ENCODE measurements at regions of chr3 and their contacts with region 1.

Region 1: GRCh38 chr3:146313411-146314111 is 62.7 kb upstream of the PLSCR4 start:
- DNase-seq: peak; percentile 90
- ATAC-seq: peak; percentile 92
- H3K4me3 ChIP-seq: no peak overlapping the region
- H3K27ac ChIP-seq: no peak overlapping the region
- H3K4me1 ChIP-seq: peaks cover 4% of the 10 kb centered on the region; the same call in 1 of the 2 replicates
- H3K27me3 ChIP-seq: no peaks in the 10 kb centered on the region
- CTCF ChIP-seq: no peak
- POLR2A ChIP-seq: no peak
- RAD21 ChIP-seq: no peak

Region 2: DNA sequence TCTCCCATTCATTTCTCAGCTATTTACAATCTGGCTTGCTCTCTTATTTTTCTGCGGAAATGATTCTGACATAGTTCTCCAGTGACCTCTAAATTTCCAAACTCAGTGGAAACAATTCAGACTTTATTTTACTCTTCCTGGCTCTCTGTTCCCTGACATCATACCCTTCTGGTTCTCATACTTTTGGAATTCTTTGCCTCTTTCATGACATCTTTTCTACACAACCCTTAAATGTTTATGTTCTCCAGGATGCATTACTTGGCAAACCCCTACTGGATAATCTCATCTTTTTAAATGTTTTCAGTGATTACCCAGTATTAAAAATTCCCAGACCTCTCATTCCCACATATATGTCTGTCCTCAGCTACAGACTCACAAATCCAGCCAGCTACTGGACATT is 38.7 kb before region 1 on chr3:
- CTCF ChIA-PET with region 1: no interaction called
- POLR2A ChIA-PET with region 1: no interaction called
- dilution Hi-C with region 1: no loop called
- in situ Hi-C with region 1: no loop called
- intact Hi-C with region 1: loop called (anchors 2 kb)
- DNase-seq: peak; percentile 98
- ATAC-seq: peak; percentile 88
- H3K4me3 ChIP-seq: no peak overlapping the region
- H3K27ac ChIP-seq: no peak overlapping the region
- H3K4me1 ChIP-seq: peaks cover 4% of the 10 kb centered on the region
- H3K27me3 ChIP-seq: no peaks in the 10 kb centered on the region
- CTCF ChIP-seq: no peak
- POLR2A ChIP-seq: no peak
- RAD21 ChIP-seq: no peak

Measured in IMR-90 (cell line).